PC-9 (cell line): ENCODE measurements at regions of chr19 and their contacts with region 1.

Region 1: DNA sequence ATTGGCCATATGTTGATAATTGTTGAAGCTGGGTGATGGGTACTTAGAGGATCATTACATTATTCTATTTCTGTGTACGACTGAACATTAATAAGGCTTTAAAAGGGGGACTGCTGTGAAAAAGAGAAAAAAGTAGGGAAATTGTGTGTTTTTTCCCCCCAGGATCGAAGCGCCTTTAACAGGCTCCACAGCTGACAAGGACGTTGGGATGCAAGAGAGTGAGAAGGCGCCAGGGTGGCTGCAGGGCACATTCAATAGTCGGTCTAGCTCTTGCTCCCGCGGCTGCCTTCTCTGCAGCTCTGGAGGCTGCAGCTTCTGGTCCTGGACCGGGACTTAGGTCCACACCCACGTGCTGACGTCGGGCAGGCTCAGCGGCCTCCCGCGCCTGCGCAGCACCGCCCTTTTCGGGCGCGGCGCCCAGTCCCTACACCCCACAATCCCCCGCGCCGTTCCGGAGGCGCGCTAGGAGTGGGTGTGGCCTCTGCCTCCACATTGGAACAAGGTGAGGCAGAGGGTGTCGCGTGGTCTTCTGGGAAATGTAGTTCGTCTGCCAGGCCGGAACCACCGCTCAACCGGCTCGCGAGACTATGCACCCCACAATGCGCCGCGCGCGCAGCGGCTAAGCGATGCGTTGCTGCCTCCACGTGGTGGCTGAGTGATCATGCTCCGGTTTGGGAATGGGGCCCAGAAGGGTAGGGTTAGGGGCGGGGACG is 4.9 kb upstream of the LRFN3 start:
- DNase-seq: peak; percentile 96 to 99
- H3K4me3 ChIP-seq: peak overlapping the region; percentile 55
- H3K27ac ChIP-seq: no peak overlapping the region
- H3K4me1 ChIP-seq: peaks cover 16% of the 10 kb centered on the region
- H3K27me3 ChIP-seq: peaks cover 13% of the 10 kb centered on the region
- CTCF ChIP-seq: peak; percentile 80

Region 2: DNA sequence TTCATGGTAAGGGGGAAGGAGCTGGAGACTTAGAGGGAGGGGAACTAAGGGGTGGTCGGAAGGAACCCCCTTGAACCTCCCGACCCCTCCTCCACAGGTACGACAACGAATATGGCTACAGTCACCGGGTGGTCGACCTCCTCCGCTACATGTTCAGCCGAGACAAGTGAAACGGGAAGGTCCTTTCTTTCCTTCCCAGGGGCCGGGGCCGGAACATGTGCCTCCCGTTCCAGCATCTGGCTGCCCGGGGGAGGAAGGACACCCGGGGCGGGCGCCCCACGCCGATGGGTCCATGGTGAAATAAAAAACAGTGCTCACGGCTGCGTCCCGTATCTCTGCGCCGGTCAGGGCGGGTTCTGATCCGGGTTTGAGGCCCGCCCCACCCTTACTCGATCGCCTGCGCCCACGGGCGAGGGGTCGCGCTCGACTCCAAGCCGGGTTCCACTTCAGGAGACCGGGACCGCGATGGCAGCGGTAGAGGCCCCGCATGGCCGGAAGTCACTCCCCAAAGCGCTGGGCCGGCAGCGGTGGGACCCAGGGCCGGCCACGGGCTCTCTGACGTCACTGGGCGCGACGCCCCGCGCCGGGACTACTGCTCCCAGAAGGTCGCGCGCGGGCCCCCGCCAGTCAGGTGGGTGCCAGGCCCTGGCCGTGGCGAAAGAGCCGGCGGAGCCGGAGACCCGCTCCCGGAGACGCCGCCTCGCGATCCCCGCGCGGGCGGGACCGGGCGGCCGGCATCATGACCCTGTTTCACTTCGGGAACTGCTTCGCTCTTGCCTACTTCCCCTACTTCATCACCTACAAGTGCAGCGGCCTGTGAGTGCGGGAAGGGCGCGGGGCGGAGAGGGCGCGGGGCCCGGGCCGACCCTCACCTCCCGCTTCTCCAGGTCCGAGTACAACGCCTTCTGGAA is 386.1 kb before region 1 on chr19 and contains the start of gene TMEM147:
- CTCF ChIA-PET with region 1: no interaction called
- POLR2A ChIA-PET with region 1: no interaction called
- intact Hi-C with region 1: loop called (anchors 5 kb)
- DNase-seq: peak; percentile 66 to 90
- H3K4me3 ChIP-seq: peak within 1 kb of the TSS; percentile 100
- H3K27ac ChIP-seq: peak within 1 kb of the TSS; percentile 59
- H3K4me1 ChIP-seq: peaks cover 14% of the 10 kb centered on the region
- H3K27me3 ChIP-seq: no peaks in the 10 kb centered on the region
- CTCF ChIP-seq: no peak
- total RNA-seq, gene TMEM147: 82.6 and 95.9 TPM in 2 replicates

Region 3: GRCh38 chr19:35748106-35749020 is 183.0 kb before region 1 on chr19 and contains the start of gene LIN37:
- CTCF ChIA-PET with region 1: interaction called, 7 read pairs
- POLR2A ChIA-PET with region 1: interaction called, 6 read pairs
- intact Hi-C with region 1: loop called (anchors 1 kb)
- DNase-seq: peak; percentile 98 to 99
- H3K4me3 ChIP-seq: peak within 1 kb of the TSS; percentile 97
- H3K27ac ChIP-seq: no peak within 1 kb of the TSS
- H3K4me1 ChIP-seq: peaks cover 36% of the 10 kb centered on the region
- H3K27me3 ChIP-seq: no peaks in the 10 kb centered on the region
- CTCF ChIP-seq: no peak
- total RNA-seq, gene LIN37: 9.4 and 17.0 TPM in 2 replicates

Region 4: DNA sequence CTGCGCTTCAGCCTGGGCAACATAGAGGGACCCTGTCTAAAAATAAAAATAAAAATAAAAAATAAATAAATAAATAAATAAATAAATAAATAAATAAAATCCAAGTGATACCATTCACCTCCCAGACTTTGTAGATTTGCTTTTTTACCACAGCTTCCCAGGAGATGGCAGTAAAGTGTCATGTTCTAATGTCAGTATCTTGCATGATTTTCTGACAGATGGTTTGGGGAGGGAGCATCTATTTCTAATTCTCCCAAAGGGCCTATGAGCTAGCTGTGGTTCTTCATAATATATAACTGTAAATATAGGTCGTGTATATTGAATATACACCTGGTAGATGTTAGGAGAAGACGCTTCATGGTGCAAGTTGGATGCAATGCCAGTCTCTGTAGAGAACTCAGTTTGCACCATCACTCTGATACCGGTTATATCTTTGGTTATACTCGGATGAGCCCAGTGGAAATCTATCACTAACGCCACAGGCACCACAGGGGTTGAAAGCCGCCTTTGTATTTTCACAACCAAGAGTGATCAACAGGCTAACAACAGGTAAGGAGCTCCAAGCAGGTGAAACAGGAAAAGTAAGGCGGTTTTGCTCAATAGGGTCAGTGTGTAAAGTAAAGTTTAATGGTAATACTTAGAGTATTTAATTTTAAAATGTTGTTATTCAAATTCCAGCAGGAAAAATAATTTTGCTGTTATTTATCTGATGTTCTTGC is 49.0 kb before region 1 on chr19:
- CTCF ChIA-PET with region 1: interaction called, 7 read pairs
- POLR2A ChIA-PET with region 1: no interaction called
- intact Hi-C with region 1: loop called (anchors 1 kb)
- DNase-seq: peak in 1 of 2 experiments; percentile 33
- H3K4me3 ChIP-seq: no peak overlapping the region
- H3K27ac ChIP-seq: no peak overlapping the region
- H3K4me1 ChIP-seq: no peaks in the 10 kb centered on the region
- H3K27me3 ChIP-seq: peaks cover 23% of the 10 kb centered on the region
- CTCF ChIP-seq: peak; percentile 74

Region 5: GRCh38 chr19:35995048-35995993 is 64.0 kb after region 1 on chr19 and contains the start of gene SDHAF1:
- CTCF ChIA-PET with region 1: no interaction called
- POLR2A ChIA-PET with region 1: interaction called, 17 read pairs
- intact Hi-C with region 1: no loop called
- DNase-seq: peak; percentile 86 to 93
- H3K4me3 ChIP-seq: peak within 1 kb of the TSS; percentile 97
- H3K27ac ChIP-seq: 0 out of 2 replicates have a peak within 1 kb of the TSS, but pooled peaks have one; percentile 23
- H3K4me1 ChIP-seq: peaks cover 8% of the 10 kb centered on the region; the same call in 1 of the 2 replicates
- H3K27me3 ChIP-seq: no peaks in the 10 kb centered on the region
- CTCF ChIP-seq: no peak
- total RNA-seq, gene SDHAF1: 16.9 and 22.4 TPM in 2 replicates